ENCODE measurements at regions of chr6 and their contacts with region 1.

Region 1: GRCh38 chr6:28335564-28336283 is at the start of gene ZSCAN31:
- DNase-seq: peak; percentile 79 to 98 (median 92)

Region 2: DNA sequence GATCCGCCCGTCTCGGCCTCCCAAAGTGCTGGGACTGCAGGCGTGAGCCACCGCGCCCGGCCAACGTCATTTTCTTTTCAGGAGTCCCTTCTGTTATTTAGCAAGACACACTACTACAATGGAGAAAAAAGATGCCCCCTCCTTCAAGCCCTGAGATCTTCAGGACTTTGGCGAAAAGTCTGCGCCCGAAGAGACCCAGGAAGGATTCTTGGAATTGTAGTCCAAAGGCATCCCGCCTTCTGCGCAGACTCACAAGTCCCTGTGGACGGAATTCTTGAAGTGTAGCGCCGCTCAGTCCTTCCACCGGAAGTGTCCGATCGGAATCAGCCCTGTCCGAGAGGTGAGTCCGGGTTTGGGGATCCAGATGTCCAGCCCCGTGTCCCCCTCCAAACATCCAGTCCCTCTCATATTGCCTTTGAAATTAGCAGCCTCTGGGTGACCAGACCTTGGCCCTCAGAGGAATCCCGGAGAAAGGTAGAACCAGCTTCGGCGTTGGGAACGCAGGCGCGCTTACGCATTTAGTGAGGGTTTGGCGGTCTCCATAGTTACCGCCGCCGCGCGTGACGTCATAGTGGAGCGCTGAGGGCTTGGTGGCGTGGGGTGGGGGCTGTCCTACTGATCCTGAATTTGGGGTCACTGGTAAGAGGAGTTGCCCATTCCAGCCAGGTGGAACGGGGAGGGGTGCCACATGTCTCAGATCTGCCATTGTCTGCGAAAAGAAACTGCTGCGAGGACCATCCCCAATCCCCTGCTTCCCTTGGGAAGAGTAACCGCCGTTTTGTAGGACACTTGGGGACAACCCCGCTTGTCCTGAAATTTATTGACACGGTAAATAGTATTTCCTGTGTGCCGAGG is 254.9 kb before region 1 on chr6:
- intact Hi-C with region 1: loop called (anchors 5 kb)
- DNase-seq: peak; percentile 87 to 96 (median 93)

Region 3: GRCh38 chr6:28274888-28275287 is 60.8 kb before region 1 on chr6:
- intact Hi-C with region 1: loop called (anchors 5 kb)
- DNase-seq: no peak

Region 4: GRCh38 chr6:28474441-28475219 is 138.9 kb after region 1 on chr6:
- intact Hi-C with region 1: no loop called
- DNase-seq: peak in 16 of 42 donors; percentile 6 to 71 (median 48)

Region 5: DNA sequence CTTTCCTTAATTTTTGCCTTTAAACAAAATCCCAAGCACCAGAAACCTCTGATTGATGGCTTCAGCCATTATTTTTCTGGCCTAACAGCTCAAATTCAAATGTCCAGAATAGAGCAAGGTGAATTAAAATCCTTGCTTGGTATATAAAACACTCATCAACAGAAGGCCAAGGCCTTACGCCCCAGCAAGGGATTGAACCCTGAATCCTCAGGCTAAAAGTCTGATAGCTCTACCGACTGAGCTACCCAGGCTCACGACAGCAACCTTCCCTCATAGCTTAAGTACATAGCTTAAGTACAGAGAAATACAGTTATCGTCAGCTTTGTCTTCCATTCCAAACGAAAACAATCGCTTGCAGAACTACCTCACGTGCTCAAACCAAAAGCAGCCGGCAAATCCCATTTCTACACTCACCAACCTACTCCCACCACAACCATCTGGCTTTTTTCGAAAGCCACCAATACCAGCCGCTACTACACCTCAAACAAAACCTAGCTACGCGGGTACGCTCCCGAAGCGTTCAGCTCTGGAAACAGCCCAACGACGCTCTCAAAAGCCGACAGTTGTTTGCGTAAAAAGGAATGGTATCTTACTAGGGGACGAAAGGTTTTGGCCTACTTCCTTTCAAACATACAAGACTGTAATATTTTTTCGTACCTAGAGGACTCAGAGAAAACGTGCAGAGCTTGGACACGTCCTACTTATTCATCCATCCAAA is 357.5 kb after region 1 on chr6:
- intact Hi-C with region 1: no loop called
- DNase-seq: no peak

Measured in head of caudate nucleus (tissue), 42 donors.